ENCODE measurements at regions of chr6 and their contacts with region 1.

Region 1: GRCh38 chr6:133609404-133610270 is 279.3 kb upstream of the TCF21 start:
- DNase-seq: peak; percentile 100
- H3K4me3 Mint-ChIP-seq: no peak overlapping the region
- H3K27ac Mint-ChIP-seq: no peak overlapping the region
- H3K4me1 Mint-ChIP-seq: no peaks in the 10 kb centered on the region
- H3K27me3 Mint-ChIP-seq: no peaks in the 10 kb centered on the region
- CTCF ChIP-seq: no peak

Region 2: GRCh38 chr6:133587546-133588160 is 22.0 kb before region 1 on chr6:
- CTCF ChIA-PET with region 1: interaction called, 5 read pairs
- POLR2A ChIA-PET with region 1: interaction called, 23 read pairs
- intact Hi-C with region 1: loop called (anchors 1 kb)
- DNase-seq: no peak
- H3K4me3 Mint-ChIP-seq: no peak overlapping the region
- H3K27ac Mint-ChIP-seq: no peak overlapping the region
- H3K4me1 Mint-ChIP-seq: peaks cover 26% of the 10 kb centered on the region
- H3K27me3 Mint-ChIP-seq: no peaks in the 10 kb centered on the region
- CTCF ChIP-seq: no peak

Region 3: DNA sequence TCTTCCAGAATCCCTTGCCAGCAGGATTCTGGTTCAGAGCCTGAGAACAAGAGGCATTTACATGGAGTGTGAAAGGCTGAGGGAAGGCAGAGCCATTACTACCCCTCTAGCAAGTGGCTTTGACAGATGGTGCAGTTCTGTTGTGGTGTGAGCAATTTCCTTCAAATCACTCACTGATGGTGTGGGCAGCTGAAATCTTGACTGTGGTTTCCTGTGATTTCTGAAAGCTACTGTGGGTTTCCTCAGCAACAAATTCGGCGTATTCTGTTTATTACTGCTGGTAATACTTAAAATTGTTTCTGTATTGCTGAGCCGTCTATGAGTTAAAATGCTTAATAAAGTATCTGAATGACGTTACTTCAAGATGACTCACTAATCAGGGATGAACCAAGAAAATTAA is 97.8 kb after region 1 on chr6:
- CTCF ChIA-PET with region 1: no interaction called
- POLR2A ChIA-PET with region 1: no interaction called
- intact Hi-C with region 1: loop called (anchors 5 kb)
- DNase-seq: peak; percentile 28
- H3K4me3 Mint-ChIP-seq: no peak overlapping the region
- H3K27ac Mint-ChIP-seq: peak overlapping the region; percentile 69
- H3K4me1 Mint-ChIP-seq: peaks cover 35% of the 10 kb centered on the region
- H3K27me3 Mint-ChIP-seq: no peaks in the 10 kb centered on the region
- CTCF ChIP-seq: no peak

Region 4: GRCh38 chr6:133741375-133741861 is 131.8 kb after region 1 on chr6:
- CTCF ChIA-PET with region 1: no interaction called
- POLR2A ChIA-PET with region 1: no interaction called
- intact Hi-C with region 1: loop called (anchors 1 kb)
- DNase-seq: peak; percentile 93
- H3K4me3 Mint-ChIP-seq: no peak overlapping the region
- H3K27ac Mint-ChIP-seq: peak overlapping the region; percentile 57
- H3K4me1 Mint-ChIP-seq: peaks cover 13% of the 10 kb centered on the region
- H3K27me3 Mint-ChIP-seq: no peaks in the 10 kb centered on the region
- CTCF ChIP-seq: no peak